PC-3 (cell line): ENCODE measurements at regions of chr3 and their contacts with region 1.

Region 1: GRCh38 chr3:105274958-105275357 is 91.8 kb upstream of the ALCAM start:
- DNase-seq: peak; percentile 95
- ATAC-seq: peak; percentile 94
- H3K4me3 ChIP-seq: peak overlapping the region; percentile 21; the same call in 1 of the 2 replicates
- H3K27ac ChIP-seq: peak overlapping the region; percentile 93
- H3K4me1 ChIP-seq: peaks cover 39% of the 10 kb centered on the region
- H3K27me3 ChIP-seq: no peaks in the 10 kb centered on the region
- CTCF ChIP-seq: no peak

Region 2: DNA sequence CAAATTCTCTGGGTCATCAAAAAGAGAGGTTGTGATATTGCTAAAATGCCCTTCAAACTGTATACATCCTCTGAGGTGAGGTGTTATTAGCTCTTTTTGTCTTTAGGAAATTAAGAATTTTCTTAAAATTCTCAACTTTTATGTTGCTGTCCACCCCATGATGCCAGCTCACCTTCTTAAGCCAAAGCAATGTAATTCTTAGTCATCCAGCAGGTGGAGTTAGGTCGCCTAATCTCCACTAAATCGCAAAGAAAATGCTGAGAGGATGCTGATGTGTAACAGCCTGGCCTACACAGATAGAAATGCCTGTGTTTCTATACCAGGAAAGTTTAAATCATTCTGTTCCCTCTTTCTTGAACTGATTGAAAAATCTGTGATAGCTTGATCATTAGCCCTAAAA is 678.4 kb before region 1 on chr3:
- CTCF ChIA-PET with region 1: no interaction called
- POLR2A ChIA-PET with region 1: interaction called, 4 read pairs
- intact Hi-C with region 1: loop called (anchors 10 kb)
- DNase-seq: peak; percentile 84
- ATAC-seq: peak; percentile 82
- H3K4me3 ChIP-seq: no peak overlapping the region
- H3K27ac ChIP-seq: peak overlapping the region; percentile 38
- H3K4me1 ChIP-seq: peaks cover 28% of the 10 kb centered on the region
- H3K27me3 ChIP-seq: no peaks in the 10 kb centered on the region
- CTCF ChIP-seq: peak; percentile 86

Region 3: GRCh38 chr3:104909198-104909597 is 365.8 kb before region 1 on chr3:
- CTCF ChIA-PET with region 1: no interaction called
- POLR2A ChIA-PET with region 1: no interaction called
- intact Hi-C with region 1: loop called (anchors 10 kb)
- DNase-seq: peak; percentile 81
- ATAC-seq: peak; percentile 88
- H3K4me3 ChIP-seq: peak overlapping the region; percentile 4; the same call in 1 of the 2 replicates
- H3K27ac ChIP-seq: peak overlapping the region; percentile 78
- H3K4me1 ChIP-seq: peaks cover 30% of the 10 kb centered on the region
- H3K27me3 ChIP-seq: no peaks in the 10 kb centered on the region
- CTCF ChIP-seq: no peak

Region 4: DNA sequence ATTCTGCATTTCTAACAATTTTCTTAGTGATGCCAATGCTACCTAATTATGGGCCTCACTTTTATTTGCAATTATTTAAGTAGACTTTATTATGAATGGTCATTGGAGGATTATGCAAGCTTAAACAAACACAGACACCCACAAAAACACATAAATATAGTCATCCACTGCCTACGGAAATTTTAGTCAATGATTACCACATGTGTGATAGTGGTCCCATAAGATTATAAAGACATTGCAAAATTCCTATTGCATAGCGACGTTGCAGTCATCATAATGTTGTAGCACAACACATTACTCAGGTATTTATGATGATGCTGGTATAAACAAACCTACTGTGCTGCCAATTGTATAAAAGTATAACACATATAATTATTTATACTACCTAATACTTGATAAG is 156.1 kb before region 1 on chr3:
- CTCF ChIA-PET with region 1: no interaction called
- POLR2A ChIA-PET with region 1: no interaction called
- intact Hi-C with region 1: loop called (anchors 2 kb)
- DNase-seq: peak; percentile 97
- ATAC-seq: peak; percentile 72
- H3K4me3 ChIP-seq: no peak overlapping the region
- H3K27ac ChIP-seq: peak overlapping the region; percentile 91
- H3K4me1 ChIP-seq: peaks cover 17% of the 10 kb centered on the region
- H3K27me3 ChIP-seq: no peaks in the 10 kb centered on the region
- CTCF ChIP-seq: no peak

Region 5: DNA sequence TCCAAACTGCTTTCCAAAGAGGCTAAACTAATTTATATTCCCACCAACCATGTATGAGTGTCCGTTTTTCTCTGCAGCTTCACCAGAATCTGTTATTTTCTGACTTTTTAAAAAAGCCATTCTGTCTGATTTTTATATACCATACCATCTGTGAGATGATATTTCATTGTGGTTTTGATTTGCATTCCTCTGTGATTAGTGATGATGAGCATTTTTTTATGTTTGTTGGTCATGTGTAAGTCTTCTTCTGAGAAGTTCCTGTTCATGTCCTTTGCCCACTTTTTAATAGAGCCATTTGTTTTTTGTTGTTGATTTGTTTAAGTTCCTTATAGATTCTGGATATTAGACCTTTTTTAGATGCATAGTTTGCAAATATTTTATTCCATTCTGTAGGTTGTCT is 87.6 kb before region 1 on chr3:
- CTCF ChIA-PET with region 1: no interaction called
- POLR2A ChIA-PET with region 1: no interaction called
- intact Hi-C with region 1: no loop called
- DNase-seq: peak; percentile 67
- ATAC-seq: peak; percentile 79
- H3K4me3 ChIP-seq: no peak overlapping the region
- H3K27ac ChIP-seq: no peak overlapping the region
- H3K4me1 ChIP-seq: no peaks in the 10 kb centered on the region
- H3K27me3 ChIP-seq: no peaks in the 10 kb centered on the region
- CTCF ChIP-seq: no peak

Region 6: GRCh38 chr3:105293441-105293840 is 18.5 kb after region 1 on chr3:
- CTCF ChIA-PET with region 1: no interaction called
- POLR2A ChIA-PET with region 1: interaction called, 6 read pairs
- intact Hi-C with region 1: loop called (anchors 1 kb)
- DNase-seq: peak; percentile 60
- ATAC-seq: peak; percentile 92
- H3K4me3 ChIP-seq: no peak overlapping the region
- H3K27ac ChIP-seq: no peak overlapping the region
- H3K4me1 ChIP-seq: peaks cover 13% of the 10 kb centered on the region
- H3K27me3 ChIP-seq: no peaks in the 10 kb centered on the region
- CTCF ChIP-seq: no peak

Region 7: DNA sequence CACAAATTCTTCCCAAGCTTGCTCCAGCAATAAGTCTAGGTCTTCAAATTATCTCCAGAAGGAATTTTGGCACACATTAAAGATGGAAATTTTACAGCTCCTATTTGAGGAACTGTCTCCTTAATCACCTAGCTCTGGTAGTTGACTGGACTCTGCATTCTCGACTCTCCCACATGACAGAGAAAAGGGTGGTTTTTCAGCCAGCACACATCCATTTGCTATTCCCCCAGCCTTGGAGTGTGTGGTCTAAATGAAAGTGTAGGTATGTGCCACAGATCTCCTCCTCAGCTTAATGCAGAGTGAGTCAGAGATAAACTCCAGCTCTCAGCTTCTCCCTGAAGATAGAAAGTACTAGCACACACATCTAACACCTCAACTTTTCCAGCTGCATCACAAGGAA is 29.5 kb after region 1 on chr3:
- CTCF ChIA-PET with region 1: no interaction called
- POLR2A ChIA-PET with region 1: no interaction called
- intact Hi-C with region 1: no loop called
- DNase-seq: no peak
- ATAC-seq: no peak
- H3K4me3 ChIP-seq: no peak overlapping the region
- H3K27ac ChIP-seq: no peak overlapping the region
- H3K4me1 ChIP-seq: no peaks in the 10 kb centered on the region
- H3K27me3 ChIP-seq: no peaks in the 10 kb centered on the region
- CTCF ChIP-seq: no peak

Region 8: DNA sequence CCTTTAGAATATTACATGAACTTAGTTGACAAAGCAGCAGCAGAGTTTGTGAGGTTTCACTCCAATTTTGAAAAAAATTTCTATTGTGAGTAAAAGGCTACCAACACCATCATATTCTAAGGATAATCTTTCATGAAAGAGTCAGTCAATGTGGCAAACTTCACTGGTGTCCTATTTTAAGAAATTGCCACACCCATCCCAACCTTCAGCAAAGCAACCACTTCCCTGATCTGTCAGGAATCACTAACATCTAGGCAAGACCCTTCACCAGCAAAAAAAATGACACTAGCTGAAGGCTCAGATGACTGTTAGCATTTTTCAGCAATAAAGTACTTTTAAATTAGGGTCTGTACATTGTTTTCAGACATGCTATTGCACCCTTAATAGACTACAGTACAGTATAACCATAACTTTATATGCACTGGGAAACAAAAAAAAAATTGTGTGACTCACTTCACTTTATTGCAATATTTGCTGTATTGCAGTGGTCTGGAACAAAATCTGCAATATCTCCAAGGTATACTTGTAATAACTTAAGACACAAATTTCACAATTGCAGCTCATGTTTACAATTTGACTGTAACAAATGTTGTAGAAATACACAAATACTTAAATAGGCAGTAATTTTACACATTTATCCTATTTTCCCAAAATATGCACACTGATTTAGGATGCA is 52.8 kb after region 1 on chr3:
- CTCF ChIA-PET with region 1: no interaction called
- POLR2A ChIA-PET with region 1: no interaction called
- intact Hi-C with region 1: loop called (anchors 1 kb)
- DNase-seq: peak; percentile 83
- ATAC-seq: peak; percentile 96
- H3K4me3 ChIP-seq: no peak overlapping the region
- H3K27ac ChIP-seq: peak overlapping the region; percentile 66
- H3K4me1 ChIP-seq: peaks cover 18% of the 10 kb centered on the region
- H3K27me3 ChIP-seq: no peaks in the 10 kb centered on the region
- CTCF ChIP-seq: no peak

Region 9: GRCh38 chr3:105353485-105354161 is 78.7 kb after region 1 on chr3:
- CTCF ChIA-PET with region 1: no interaction called
- POLR2A ChIA-PET with region 1: no interaction called
- intact Hi-C with region 1: loop called (anchors 2 kb)
- DNase-seq: peak; percentile 94
- ATAC-seq: peak; percentile 66
- H3K4me3 ChIP-seq: no peak overlapping the region
- H3K27ac ChIP-seq: peak overlapping the region; percentile 77
- H3K4me1 ChIP-seq: peaks cover 58% of the 10 kb centered on the region
- H3K27me3 ChIP-seq: no peaks in the 10 kb centered on the region
- CTCF ChIP-seq: no peak

Region 10: GRCh38 chr3:105564546-105565288 is 289.8 kb after region 1 on chr3:
- CTCF ChIA-PET with region 1: no interaction called
- POLR2A ChIA-PET with region 1: no interaction called
- intact Hi-C with region 1: no loop called
- DNase-seq: no peak
- ATAC-seq: no peak
- H3K4me3 ChIP-seq: no peak overlapping the region
- H3K27ac ChIP-seq: no peak overlapping the region
- H3K4me1 ChIP-seq: no peaks in the 10 kb centered on the region
- H3K27me3 ChIP-seq: no peaks in the 10 kb centered on the region
- CTCF ChIP-seq: no peak